Ascending aorta (tissue), 2 donors: ENCODE measurements at regions of chr16 and their contacts with region 1.

Region 1: GRCh38 chr16:89686520-89687091 is at the start of gene CDK10:
- DNase-seq: peak; percentile 42 to 93
- H3K4me3 ChIP-seq: peak within 1 kb of the TSS; percentile 63 to 80
- H3K27ac ChIP-seq: peak within 1 kb of the TSS; percentile 58 to 82
- H3K4me1 ChIP-seq: peaks cover 4 to 5% of the 10 kb centered on the region in 2 donors
- H3K27me3 ChIP-seq: no peaks in the 10 kb centered on the region
- CTCF ChIP-seq: peak in 1 of 3 experiments; percentile 6
- total RNA-seq, gene CDK10: 141 TPM

Region 2: DNA sequence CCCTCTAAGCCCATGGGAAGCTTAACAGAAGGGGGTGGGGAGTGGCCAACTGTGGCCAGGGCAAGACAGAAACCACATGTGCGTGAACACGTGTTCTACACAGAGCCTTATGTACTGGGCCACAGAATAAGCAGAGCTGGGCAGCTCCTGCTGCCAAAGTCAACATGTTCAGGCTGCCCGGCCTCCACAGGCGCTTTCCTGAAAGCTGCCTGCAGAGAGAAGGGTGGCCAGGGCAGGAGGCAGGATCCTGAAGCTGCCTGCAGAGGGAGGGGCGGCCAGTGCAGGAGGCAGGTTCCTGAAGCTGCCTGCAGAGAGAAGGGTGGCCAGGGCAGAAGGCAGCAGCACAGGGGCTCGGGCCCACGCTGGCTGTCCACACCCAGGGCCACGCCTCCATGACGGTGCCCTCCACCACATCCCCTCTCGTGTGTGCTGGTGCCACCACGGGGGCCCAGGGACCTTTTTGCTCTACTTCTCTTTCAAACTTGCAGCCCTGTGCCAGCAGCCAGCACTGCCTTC is 275.8 kb before region 1 on chr16:
- intact Hi-C with region 1: no loop called
- DNase-seq: peak; percentile 30 to 73
- H3K4me3 ChIP-seq: no peak overlapping the region
- H3K27ac ChIP-seq: peak overlapping the region; percentile 1 to 42
- H3K4me1 ChIP-seq: peaks cover 25 to 65% of the 10 kb centered on the region in 2 donors
- H3K27me3 ChIP-seq: no peaks in the 10 kb centered on the region
- CTCF ChIP-seq: peak in 1 of 3 experiments; percentile 16

Region 3: GRCh38 chr16:89700100-89700648 is 13.6 kb after region 1 on chr16:
- intact Hi-C with region 1: loop called (anchors 1 kb)
- DNase-seq: peak; percentile 96 to 99
- H3K4me3 ChIP-seq: peak overlapping the region; percentile 76 to 77
- H3K27ac ChIP-seq: peak overlapping the region; percentile 88 to 93
- H3K4me1 ChIP-seq: peaks cover 7 to 20% of the 10 kb centered on the region in 2 donors
- H3K27me3 ChIP-seq: no peaks in the 10 kb centered on the region
- CTCF ChIP-seq: peak; percentile 59 to 83 (median 63)